ENCODE measurements at regions of chr7 and their contacts with region 1.

Region 1: GRCh38 chr7:112939574-112940314 is 146.9 kb downstream of the GPR85 start:
- DNase-seq: peak; percentile 100
- H3K4me3 Mint-ChIP-seq: peak overlapping the region; percentile 87
- H3K27ac Mint-ChIP-seq: peak overlapping the region; percentile 93
- H3K4me1 Mint-ChIP-seq: peaks cover 34% of the 10 kb centered on the region
- H3K27me3 Mint-ChIP-seq: peaks cover 2% of the 10 kb centered on the region

Region 2: GRCh38 chr7:112782494-112782893 is 157.2 kb before region 1 on chr7:
- CTCF ChIA-PET with region 1: no interaction called
- POLR2A ChIA-PET with region 1: no interaction called
- intact Hi-C with region 1: loop called (anchors 2 kb)
- DNase-seq: peak; percentile 55
- H3K4me3 Mint-ChIP-seq: no peak overlapping the region
- H3K27ac Mint-ChIP-seq: peak overlapping the region; percentile 62
- H3K4me1 Mint-ChIP-seq: peaks cover 27% of the 10 kb centered on the region
- H3K27me3 Mint-ChIP-seq: no peaks in the 10 kb centered on the region

Region 3: DNA sequence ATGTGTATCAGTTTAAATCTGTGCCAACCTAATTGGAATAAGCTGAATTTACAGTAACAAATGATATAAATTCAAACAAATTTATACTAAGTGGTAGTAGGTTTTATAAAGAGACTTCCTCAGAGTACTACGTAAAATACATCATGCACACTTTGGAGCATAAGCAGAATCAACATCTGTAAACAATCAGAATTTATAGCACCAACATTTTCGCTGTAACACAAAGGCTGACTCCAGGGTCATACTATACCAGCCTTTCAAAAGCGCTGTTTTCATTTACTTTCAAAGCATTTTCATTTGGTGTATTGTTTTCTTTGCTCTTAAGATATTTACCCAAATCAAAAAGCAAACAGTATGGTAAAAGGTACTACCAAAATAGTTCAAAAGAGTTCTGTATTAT is 120.2 kb before region 1 on chr7:
- CTCF ChIA-PET with region 1: no interaction called
- POLR2A ChIA-PET with region 1: no interaction called
- intact Hi-C with region 1: no loop called
- DNase-seq: no peak
- H3K4me3 Mint-ChIP-seq: no peak overlapping the region
- H3K27ac Mint-ChIP-seq: no peak overlapping the region
- H3K4me1 Mint-ChIP-seq: no peaks in the 10 kb centered on the region
- H3K27me3 Mint-ChIP-seq: no peaks in the 10 kb centered on the region

Region 4: GRCh38 chr7:112959276-112959675 is 19.5 kb after region 1 on chr7:
- CTCF ChIA-PET with region 1: no interaction called
- POLR2A ChIA-PET with region 1: no interaction called
- intact Hi-C with region 1: no loop called
- DNase-seq: no peak
- H3K4me3 Mint-ChIP-seq: no peak overlapping the region
- H3K27ac Mint-ChIP-seq: no peak overlapping the region
- H3K4me1 Mint-ChIP-seq: no peaks in the 10 kb centered on the region
- H3K27me3 Mint-ChIP-seq: peaks cover 37% of the 10 kb centered on the region

Measured in activated CD4-positive, alpha-beta memory T cell treated with anti-CD3 and anti-CD28 coated beads for 36 hours (primary cell).